ENCODE measurements at regions of chr7 and their contacts with region 1.

Region 1: GRCh38 chr7:42831718-42832431 is 80.0 kb downstream of the C7orf25 start:
- DNase-seq: peak; percentile 53
- H3K27ac ChIP-seq: no peak overlapping the region
- CTCF ChIP-seq: peak; percentile 88

Region 2: GRCh38 chr7:42227936-42228591 is 603.8 kb before region 1 on chr7:
- CTCF ChIA-PET with region 1: interaction called, 10 read pairs
- POLR2A ChIA-PET with region 1: no interaction called
- DNase-seq: no peak
- H3K27ac ChIP-seq: peak overlapping the region; percentile 39
- CTCF ChIP-seq: no peak

Measured in RWPE1 (cell line).